Activated B cell treated with CpG ODN at 0.5 μM for 24 hours (primary cell): ENCODE measurements at regions of chr21 and their contacts with region 1.

Region 1: GRCh38 chr21:26850108-26850643 is 5.0 kb upstream of the ADAMTS1 start:
- DNase-seq: no peak
- ATAC-seq: no peak
- H3K4me3 Mint-ChIP-seq: no peak overlapping the region
- H3K27ac Mint-ChIP-seq: no peak overlapping the region
- H3K4me1 Mint-ChIP-seq: peaks cover 19% of the 10 kb centered on the region
- H3K27me3 Mint-ChIP-seq: peaks cover 34% of the 10 kb centered on the region
- CTCF ChIP-seq: no peak

Region 2: GRCh38 chr21:28336314-28336713 is 1486.1 kb after region 1 on chr21:
- CTCF ChIA-PET with region 1: no interaction called
- POLR2A ChIA-PET with region 1: no interaction called
- intact Hi-C with region 1: loop called (anchors 2 kb)
- DNase-seq: no peak
- ATAC-seq: no peak
- H3K4me3 Mint-ChIP-seq: no peak overlapping the region
- H3K27ac Mint-ChIP-seq: no peak overlapping the region
- H3K4me1 Mint-ChIP-seq: no peaks in the 10 kb centered on the region
- H3K27me3 Mint-ChIP-seq: no peaks in the 10 kb centered on the region
- CTCF ChIP-seq: no peak